MCF 10A (cell line): ENCODE measurements at regions of chr11 and their contacts with region 1.

Region 1: DNA sequence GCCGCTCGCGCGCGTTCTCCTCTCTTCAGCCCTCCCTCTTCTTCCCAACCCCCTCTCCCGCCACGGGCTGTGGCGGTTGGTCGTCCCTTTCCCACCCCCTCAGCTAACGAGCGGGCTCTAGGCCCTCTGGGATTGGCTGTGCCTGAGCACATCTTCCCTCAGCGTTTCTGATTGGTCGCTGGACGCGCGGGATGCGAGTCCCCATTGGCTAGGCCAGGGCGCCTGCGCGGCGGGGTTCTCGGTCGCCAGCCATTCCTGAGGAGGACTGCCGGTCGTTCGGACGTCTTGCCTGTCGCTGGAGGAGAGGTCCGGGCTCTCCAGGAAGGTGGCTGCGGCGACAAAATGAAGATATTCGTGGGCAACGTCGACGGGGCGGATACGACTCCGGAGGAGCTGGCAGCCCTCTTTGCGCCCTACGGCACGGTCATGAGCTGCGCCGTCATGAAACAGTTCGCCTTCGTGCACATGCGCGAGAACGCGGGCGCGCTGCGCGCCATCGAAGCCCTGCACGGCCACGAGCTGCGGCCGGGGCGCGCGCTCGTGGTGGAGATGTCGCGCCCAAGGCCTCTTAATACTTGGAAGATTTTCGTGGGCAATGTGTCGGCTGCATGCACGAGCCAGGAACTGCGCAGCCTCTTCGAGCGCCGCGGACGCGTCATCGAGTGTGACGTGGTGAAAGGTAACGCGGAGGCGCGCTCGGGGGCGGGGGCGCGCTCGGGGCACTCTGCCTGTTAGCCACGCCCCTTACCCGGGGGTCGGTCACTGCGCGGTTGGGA is at the start of gene RBM14:
- DNase-seq: peak; percentile 99
- H3K4me3 Mint-ChIP-seq: peak within 1 kb of the TSS; percentile 86
- H3K27ac Mint-ChIP-seq: peak within 1 kb of the TSS; percentile 96
- H3K4me1 Mint-ChIP-seq: peaks cover 20% of the 10 kb centered on the region
- H3K27me3 Mint-ChIP-seq: no peaks in the 10 kb centered on the region
- CTCF ChIP-seq: no peak
- total RNA-seq, gene RBM14: 78.1 and 88.3 TPM in 2 replicates

Region 2: DNA sequence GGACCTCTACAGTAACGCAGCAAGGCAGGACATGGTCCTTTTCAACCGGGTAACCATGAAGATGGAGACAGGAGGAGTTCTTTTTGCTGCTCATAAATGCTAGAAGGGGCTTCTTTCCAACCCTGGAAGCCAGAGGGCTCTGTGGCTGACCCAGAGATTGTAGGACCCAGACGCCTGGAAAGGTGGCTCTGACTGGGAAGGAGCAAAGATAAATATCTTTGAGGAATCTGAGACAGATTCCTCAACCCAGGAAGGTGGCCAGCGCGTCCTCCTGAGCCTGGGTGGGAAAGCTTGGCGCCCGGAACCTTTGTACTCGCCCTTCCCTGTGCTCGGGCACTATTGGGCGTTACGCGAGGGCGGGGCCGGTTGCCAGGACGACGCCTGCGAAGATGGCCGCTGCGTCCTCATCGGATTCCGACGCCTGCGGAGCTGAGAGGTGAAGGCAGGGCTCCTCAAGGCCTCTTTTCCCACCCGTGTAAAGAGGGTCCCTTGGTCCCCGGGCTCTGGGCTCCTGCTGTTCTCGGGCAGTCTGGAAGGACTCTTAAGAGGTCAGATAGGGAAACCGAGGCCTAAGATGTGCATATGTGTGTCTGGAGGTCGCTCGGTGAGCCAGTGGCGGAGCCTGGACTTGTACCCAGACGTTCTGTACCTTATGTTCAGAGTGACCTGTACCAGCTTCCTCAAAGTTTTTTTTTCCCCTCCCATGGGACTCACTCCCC is 106.1 kb before region 1 on chr11 and contains the start of gene BBS1:
- CTCF ChIA-PET with region 1: no interaction called
- POLR2A ChIA-PET with region 1: interaction called, 11 read pairs
- intact Hi-C with region 1: no loop called
- DNase-seq: peak; percentile 72
- H3K4me3 Mint-ChIP-seq: peak within 1 kb of the TSS; percentile 98
- H3K27ac Mint-ChIP-seq: peak within 1 kb of the TSS; percentile 88
- H3K4me1 Mint-ChIP-seq: peaks cover 11% of the 10 kb centered on the region
- H3K27me3 Mint-ChIP-seq: no peaks in the 10 kb centered on the region
- CTCF ChIP-seq: no peak
- total RNA-seq, gene BBS1: 31.7 and 33.9 TPM in 2 replicates

Region 3: GRCh38 chr11:66592457-66593302 is 23.9 kb before region 1 on chr11 and contains the starts of genes CCDC87 and CCS:
- CTCF ChIA-PET with region 1: interaction called, 4 read pairs
- POLR2A ChIA-PET with region 1: interaction called, 38 read pairs
- intact Hi-C with region 1: no loop called
- DNase-seq: peak; percentile 94
- H3K4me3 Mint-ChIP-seq: peak within 1 kb of the TSS; percentile 94
- H3K27ac Mint-ChIP-seq: peak within 1 kb of the TSS; percentile 96
- H3K4me1 Mint-ChIP-seq: peaks cover 5% of the 10 kb centered on the region
- H3K27me3 Mint-ChIP-seq: no peaks in the 10 kb centered on the region
- CTCF ChIP-seq: peak; percentile 33
- total RNA-seq, gene CCDC87: not detected in 2 replicates
- total RNA-seq, gene CCS: 25.8 and 34.4 TPM in 2 replicates